Sciatic nerve (tissue), 2 donors: ENCODE measurements at regions of chr4 and their contacts with region 1.

Region 1: DNA sequence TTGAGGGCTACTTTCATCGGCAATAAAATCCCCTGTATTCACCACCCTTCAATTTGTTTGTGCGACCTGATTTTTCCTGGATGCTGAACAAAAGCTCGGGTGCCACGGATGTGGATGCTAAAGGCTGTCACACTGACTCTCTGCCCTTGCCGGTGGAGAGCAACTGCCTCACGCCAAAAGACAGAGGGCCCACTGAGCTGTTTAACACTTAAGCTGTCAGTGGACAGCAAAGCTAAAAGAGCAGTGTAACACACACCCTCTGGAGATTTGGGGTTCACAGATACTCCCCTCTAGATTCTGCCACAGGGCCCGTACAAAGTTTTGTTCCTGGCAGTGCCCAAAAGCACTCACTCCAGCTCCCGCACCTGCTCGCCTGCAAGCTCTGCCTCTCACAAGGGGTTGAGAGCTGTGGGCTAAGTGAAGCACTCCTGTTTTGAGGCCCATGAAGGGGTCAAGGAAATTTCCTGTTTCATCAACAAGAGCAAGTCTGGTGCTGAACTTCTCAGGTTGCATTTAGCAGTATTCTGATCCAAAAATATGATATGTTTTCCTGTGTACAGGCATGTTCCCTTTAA is 1571.9 kb downstream of the ADGRL3 start:
- DNase-seq: no peak
- ATAC-seq: no peak

Region 2: GRCh38 chr4:62232814-62233213 is 539.3 kb before region 1 on chr4:
- intact Hi-C with region 1: loop called (anchors 5 kb)
- DNase-seq: no peak
- ATAC-seq: no peak

Region 3: DNA sequence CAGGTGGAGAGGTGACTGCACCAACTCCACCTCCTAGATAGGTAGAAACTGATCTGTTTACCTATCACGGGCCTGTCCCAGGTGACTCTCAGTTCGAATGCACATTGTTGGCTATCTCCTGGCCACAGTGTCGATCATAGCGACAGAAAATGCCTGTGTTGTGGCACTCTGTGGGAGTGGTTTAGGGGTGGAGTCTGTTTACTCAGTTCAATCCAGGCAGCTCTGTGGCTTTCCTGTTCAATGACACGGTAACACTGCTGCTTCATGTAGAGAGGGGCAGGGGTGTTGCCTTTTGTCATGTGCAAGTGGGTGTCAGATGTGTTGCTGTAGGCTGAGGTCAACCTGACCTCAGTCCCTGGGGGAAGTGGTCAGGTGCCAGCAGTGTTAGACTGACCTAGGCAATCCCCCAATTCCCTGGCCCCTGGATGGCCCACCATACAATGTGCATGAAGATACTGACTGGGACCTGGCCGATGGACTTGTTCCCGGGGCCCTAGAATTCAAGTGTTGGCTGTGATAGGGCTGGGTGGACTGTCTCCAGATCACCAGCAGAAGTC is 34.8 kb after region 1 on chr4:
- intact Hi-C with region 1: no loop called
- DNase-seq: no peak
- ATAC-seq: no peak

Region 4: GRCh38 chr4:63169836-63170235 is 397.8 kb after region 1 on chr4:
- intact Hi-C with region 1: no loop called
- DNase-seq: no peak
- ATAC-seq: no peak